ENCODE measurements at regions of chr17 and their contacts with region 1.

Region 1: DNA sequence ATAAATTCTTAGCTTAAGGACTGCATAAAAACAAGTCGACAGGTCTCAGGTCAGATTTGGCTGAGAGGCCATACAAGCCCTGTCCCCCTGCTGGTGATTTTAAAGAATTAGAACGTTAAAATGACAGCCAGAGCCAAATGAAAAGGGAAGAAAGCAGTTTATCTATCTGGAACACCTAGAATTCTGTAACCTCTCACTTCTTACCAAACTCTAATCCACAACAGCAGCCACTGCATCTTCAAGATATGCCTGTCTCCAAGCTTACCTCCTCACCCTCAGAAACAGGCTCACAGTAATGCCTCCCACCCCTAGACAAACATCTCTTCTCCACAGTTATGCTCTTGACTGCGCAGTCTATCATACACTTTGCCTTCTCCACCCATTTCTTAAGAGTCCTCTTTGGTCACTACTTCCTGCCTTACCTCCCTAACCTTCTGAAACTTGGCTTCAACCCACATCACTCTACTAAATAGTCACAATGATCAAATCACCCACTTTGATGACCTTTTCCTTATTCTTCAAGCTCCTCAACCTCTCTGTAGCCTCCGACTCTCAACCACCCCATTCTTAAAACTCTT is 14.2 kb downstream of the ANKFY1 start:
- DNase-seq: no peak
- ATAC-seq: peak; percentile 27; the same call in 1 of the 2 replicates
- H3K4me3 Mint-ChIP-seq: no peak overlapping the region
- H3K27ac Mint-ChIP-seq: peak overlapping the region; percentile 55
- H3K4me1 Mint-ChIP-seq: peaks cover 34% of the 10 kb centered on the region
- H3K27me3 Mint-ChIP-seq: no peaks in the 10 kb centered on the region
- CTCF ChIP-seq: 0 out of 2 replicates have a peak, but pooled peaks have one; percentile 18

Region 2: GRCh38 chr17:4161179-4161559 is 88.4 kb before region 1 on chr17:
- CTCF ChIA-PET with region 1: no interaction called
- POLR2A ChIA-PET with region 1: no interaction called
- DNase-seq: peak; percentile 21
- ATAC-seq: peak; percentile 22; the same call in 1 of the 2 replicates
- H3K4me3 Mint-ChIP-seq: no peak overlapping the region
- H3K27ac Mint-ChIP-seq: peak overlapping the region; percentile 73
- H3K4me1 Mint-ChIP-seq: peaks cover 16% of the 10 kb centered on the region
- H3K27me3 Mint-ChIP-seq: no peaks in the 10 kb centered on the region
- CTCF ChIP-seq: no peak

Region 3: DNA sequence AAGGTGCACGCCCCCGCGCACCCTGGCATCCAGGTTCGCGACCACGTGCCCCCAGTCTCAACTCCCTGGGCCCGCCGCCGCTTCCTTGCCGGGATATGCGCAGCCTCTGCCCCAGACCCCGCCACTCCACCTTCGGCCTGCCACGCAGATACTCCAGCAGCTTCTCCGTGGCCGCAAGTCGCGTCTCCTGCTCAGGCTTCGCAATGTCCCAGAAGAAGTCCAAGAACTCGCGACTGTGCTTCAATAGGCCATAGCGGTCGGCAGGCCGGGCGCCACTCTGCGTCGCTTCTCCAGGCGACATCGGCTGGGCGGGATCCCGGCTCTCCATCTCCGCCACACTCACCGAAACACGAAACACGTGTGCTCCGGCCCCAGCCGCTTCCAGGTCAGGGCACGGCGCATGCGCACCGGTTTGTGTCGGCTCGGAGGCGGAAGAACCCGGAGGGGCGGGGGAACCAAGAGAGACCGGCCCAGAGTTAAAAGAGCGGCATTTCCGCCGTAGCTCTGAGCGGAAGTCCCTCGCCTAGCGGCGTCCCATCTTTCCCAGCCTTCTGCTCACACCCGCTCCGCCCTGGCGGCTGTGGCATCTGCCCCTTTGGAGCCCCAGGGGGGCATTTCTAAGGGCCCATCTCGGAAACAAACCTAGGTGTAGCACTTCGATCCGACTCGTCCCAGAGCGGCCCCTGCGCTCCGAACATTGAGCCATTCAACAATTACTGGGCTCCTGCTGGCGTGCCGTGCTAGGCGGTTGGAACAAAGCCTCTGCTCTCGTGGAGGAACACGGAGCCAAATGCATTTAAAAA is 305.7 kb after region 1 on chr17 and contains the start of gene MYBBP1A:
- CTCF ChIA-PET with region 1: no interaction called
- POLR2A ChIA-PET with region 1: interaction called, 10 read pairs
- DNase-seq: peak; percentile 94
- ATAC-seq: peak; percentile 90
- H3K4me3 Mint-ChIP-seq: peak within 1 kb of the TSS; percentile 78
- H3K27ac Mint-ChIP-seq: peak within 1 kb of the TSS; percentile 95
- H3K4me1 Mint-ChIP-seq: peaks cover 32% of the 10 kb centered on the region
- H3K27me3 Mint-ChIP-seq: peaks cover 2% of the 10 kb centered on the region; the same call in 1 of the 2 replicates
- CTCF ChIP-seq: no peak
- total RNA-seq, gene MYBBP1A: 108 to 163 TPM (median 118 TPM) in 3 replicates